ENCODE measurements at regions of chr3 and their contacts with region 1.

Region 1: DNA sequence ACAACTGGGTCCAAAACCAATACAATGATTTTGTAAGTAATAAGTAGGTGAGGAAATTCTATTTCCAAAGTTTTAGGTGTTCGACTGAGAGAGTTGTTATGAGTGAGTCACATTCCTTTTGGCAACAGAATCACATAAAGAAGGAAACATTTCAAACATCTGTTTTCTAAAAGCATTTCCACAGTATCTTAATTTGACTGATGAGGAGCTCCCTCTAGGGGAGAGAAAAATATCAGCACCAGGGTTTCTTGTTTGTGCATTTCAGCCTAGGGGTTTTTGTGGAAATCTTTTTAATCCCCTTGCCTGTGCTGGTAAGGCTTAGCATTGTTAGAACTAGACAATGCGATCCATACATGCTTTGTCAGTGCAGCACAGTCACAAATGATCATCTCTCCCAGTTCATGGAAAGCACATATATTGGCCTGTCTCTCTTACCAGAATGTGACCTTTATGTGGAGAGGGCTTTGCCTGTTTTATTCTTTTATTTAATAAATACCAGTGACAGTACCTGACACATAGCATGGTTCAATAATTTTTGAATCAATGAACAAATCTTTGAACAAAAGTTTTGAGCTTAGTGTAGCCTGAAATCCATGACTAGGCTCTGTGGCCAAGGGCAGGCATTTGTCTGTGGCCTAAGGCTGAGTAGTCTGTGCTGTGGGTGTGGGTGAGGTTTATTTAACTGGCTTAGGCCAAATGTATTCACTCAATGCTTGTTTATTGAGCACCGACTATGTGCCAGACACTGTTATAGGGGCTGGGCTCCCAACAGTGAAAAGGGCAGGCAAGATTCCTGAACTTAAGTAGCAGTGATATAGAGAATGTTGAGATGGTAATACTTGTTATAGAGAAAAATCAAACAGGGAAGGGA is 21.1 kb upstream of the IQCF6 start:
- DNase-seq: no peak
- H3K4me3 ChIP-seq: no peak overlapping the region
- H3K27ac ChIP-seq: no peak overlapping the region
- H3K4me1 ChIP-seq: no peaks in the 10 kb centered on the region
- H3K27me3 ChIP-seq: peaks cover 0 to 18% (median 6%) of the 10 kb centered on the region in 7 donors
- CTCF ChIP-seq: peak in 10 of 11 experiments; percentile 12 to 76 (median 71)
- POLR2A ChIP-seq: no peak

Region 2: DNA sequence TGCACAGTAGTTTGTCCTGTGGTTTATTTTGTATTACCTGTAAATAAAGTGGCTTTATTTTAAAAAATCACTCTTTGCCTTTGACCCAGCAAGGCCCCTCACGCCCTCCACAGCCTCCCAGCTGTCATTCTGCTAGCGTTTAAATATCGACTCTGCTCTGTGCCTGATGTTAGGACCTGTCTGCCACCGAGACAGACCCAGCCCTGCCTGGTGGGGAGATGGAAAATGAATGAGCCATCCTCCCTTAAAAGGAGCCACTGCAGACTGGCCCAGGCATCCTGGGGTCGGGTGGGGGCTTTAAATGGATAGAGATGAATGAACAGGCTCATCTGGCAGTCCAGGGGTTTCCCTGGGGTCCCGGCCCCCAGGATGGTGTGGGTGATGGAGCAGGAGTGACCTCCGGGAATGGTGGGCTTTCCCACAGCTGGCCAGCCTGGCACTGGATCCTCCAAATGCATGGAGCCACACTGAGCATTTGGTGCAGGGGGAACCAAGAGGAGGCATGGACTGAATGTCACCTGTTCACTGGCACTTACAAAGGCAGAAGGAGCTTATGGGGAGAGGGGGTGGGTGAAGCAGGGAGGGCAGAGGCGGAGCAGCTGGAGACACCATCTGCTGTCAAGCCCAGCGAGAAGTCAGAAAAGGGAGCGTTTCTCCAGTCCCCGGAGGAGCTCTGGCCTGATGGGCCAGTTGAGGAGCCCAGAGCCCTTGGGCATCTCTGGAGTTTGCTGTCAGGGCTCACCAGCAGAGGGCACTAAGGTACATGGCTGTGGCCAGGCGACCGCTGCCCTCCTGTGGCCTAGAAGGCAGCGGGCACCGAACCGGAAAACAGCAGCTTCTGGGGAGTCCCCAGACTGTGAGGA is 81.3 kb before region 1 on chr3:
- intact Hi-C with region 1: loop called (anchors 10 kb)
- DNase-seq: no peak
- H3K4me3 ChIP-seq: no peak overlapping the region
- H3K27ac ChIP-seq: no peak overlapping the region
- H3K4me1 ChIP-seq: peaks cover 0 to 22% (median 11%) of the 10 kb centered on the region in 6 donors
- H3K27me3 ChIP-seq: no peaks in the 10 kb centered on the region
- CTCF ChIP-seq: peak in 10 of 11 experiments; percentile 46 to 72 (median 66)
- POLR2A ChIP-seq: no peak

Measured in spleen (tissue), 13 donors.